GM18951 (cell line): ENCODE measurements at regions of chr7 and their contacts with region 1.

Region 1: DNA sequence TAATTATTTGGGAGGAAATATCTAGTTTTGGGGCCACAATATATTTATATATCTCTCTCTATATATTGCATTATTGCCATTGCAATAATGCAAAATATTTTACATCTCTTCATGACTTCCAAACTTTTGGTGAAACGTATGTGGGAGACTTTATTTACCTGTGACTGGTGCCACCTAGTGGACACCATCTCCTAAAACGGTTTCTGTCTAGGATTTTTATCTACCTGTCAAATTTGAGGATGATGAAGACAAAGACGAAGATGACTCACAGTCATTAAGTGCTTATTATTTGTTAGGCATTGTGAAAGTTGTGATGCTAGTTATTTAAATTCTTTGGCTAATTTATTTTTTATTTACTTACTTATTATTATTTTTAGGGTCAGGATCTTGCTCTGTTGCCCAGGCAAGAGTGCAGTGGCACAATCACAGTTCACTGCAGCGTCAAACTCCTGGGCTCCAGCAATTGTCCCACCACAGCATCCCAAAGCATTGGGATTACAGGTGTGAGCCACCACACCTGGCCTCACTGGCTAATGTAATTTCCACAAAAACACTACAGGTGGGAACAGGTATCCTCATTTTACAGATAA is 18.7 kb upstream of the CBLL1 start:
- POLR2A ChIP-seq: no peak

Region 2: GRCh38 chr7:107450970-107451369 is 274.3 kb before region 1 on chr7:
- in situ Hi-C with region 1: loop called (anchors 10 kb)
- POLR2A ChIP-seq: no peak